PC-9 (cell line): ENCODE measurements at regions of chr3 and their contacts with region 1.

Region 1: DNA sequence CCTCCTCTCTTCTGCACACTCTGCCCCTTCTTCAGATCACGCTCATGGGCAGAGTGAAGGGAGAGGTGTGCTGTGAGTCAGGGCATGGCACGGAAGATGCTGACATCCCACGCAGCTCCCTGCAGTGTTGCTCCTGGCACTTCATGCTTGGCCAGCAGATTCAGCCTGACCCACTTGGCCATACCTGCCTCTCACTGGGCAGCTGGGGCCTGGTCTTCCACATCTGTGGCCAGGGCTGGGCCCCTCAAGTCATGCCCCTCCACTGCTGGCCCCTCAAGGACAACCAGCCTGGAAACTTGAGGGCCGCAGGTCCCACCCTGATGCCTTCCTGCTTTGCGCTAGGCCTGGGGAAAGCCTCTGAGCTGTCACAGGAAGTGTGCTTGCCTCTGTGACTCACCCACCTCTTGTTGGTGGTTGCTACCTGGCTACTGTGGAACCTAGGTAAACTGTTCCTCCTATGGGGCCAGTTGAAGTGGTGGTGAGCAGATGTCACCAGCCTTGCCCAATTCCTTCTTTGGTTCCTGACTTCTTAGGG is 48.7 kb downstream of the BSN start:
- DNase-seq: peak; percentile 64 to 83
- H3K4me3 ChIP-seq: no peak overlapping the region
- H3K27ac ChIP-seq: peak overlapping the region; percentile 67
- H3K4me1 ChIP-seq: peaks cover 52% of the 10 kb centered on the region
- H3K27me3 ChIP-seq: no peaks in the 10 kb centered on the region
- CTCF ChIP-seq: no peak

Region 2: DNA sequence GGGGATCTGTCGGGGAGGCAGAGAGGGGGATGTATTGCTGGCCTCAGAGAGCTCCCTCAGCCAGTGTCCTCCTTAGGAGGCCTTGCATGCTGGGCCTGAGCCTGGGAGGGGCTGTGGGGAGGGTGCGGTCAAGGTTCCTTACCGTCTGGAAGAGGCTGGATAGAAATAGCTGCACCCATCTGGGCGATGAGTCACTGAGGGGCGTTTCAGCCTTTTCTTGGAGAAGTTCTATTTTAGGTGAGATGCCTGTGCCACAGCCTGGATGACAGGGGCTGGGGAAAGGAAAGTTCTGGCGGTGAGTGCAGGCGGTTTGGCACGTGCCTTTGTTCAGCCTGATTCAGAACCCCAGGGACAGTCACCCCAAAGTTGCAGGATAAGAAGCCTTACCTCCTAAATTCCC is 35.5 kb after region 1 on chr3:
- CTCF ChIA-PET with region 1: no interaction called
- POLR2A ChIA-PET with region 1: no interaction called
- intact Hi-C with region 1: loop called (anchors 2 kb)
- DNase-seq: peak; percentile 78 to 81
- H3K4me3 ChIP-seq: no peak overlapping the region
- H3K27ac ChIP-seq: no peak overlapping the region
- H3K4me1 ChIP-seq: peaks cover 27% of the 10 kb centered on the region
- H3K27me3 ChIP-seq: no peaks in the 10 kb centered on the region
- CTCF ChIP-seq: no peak